WTC11 (cell line): ENCODE measurements at regions of chr16 and their contacts with region 1.

Region 1: GRCh38 chr16:84308120-84308519 is 13.4 kb downstream of the WFDC1 start:
- DNase-seq: peak; percentile 79
- ATAC-seq: peak; percentile 79
- H3K4me3 Mint-ChIP-seq: no peak overlapping the region
- H3K27ac Mint-ChIP-seq: no peak overlapping the region
- H3K4me1 Mint-ChIP-seq: peaks cover 14% of the 10 kb centered on the region
- H3K27me3 Mint-ChIP-seq: peaks cover 5% of the 10 kb centered on the region
- CTCF ChIP-seq: peak; percentile 32; the same call in 1 of the 2 replicates

Region 2: DNA sequence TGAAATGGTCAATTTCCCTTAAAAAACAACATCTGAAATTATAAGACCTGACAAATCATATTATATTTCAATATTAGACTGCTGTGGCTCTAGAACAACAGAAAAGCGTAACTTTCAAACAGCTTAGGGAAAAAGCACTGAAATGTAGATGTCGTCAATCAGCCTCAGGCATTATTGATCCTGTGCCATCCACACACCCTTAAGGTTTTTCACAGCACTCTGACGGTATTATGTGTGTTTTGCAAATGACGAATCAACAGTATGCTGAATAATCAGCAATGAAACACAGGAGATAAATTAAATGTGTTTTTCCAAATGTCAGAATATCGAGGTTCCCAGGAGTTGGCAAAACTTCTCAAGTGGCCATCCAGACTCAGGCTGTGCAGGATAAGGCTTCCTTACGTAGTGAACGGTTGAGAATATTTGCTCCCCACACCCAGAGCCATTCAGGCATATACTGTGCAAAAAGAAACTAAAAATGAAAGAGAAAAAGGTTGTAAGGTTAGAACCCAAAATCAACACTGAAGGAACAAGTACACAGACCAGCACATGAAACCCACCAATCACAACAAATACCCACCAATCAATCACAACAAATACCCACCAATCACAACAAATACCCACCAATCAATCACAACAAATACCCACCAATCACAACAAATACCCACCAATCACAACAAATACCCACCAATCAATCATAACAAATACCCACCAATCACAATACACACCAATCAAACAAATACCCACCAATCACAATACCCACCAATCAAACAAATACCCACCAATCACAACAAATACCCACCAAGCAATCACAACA is 183.7 kb before region 1 on chr16:
- CTCF ChIA-PET with region 1: no interaction called
- POLR2A ChIA-PET with region 1: no interaction called
- DNase-seq: no peak
- ATAC-seq: no peak
- H3K4me3 Mint-ChIP-seq: no peak overlapping the region
- H3K27ac Mint-ChIP-seq: no peak overlapping the region
- H3K4me1 Mint-ChIP-seq: no peaks in the 10 kb centered on the region
- H3K27me3 Mint-ChIP-seq: no peaks in the 10 kb centered on the region
- CTCF ChIP-seq: no peak

Region 3: GRCh38 chr16:84277237-84277823 is 30.8 kb before region 1 on chr16:
- CTCF ChIA-PET with region 1: interaction called, 86 read pairs
- POLR2A ChIA-PET with region 1: interaction called, 3 read pairs
- DNase-seq: peak; percentile 83
- ATAC-seq: peak; percentile 79
- H3K4me3 Mint-ChIP-seq: no peak overlapping the region
- H3K27ac Mint-ChIP-seq: no peak overlapping the region
- H3K4me1 Mint-ChIP-seq: peaks cover 10% of the 10 kb centered on the region
- H3K27me3 Mint-ChIP-seq: no peaks in the 10 kb centered on the region; the same call in 1 of the 2 replicates
- CTCF ChIP-seq: peak; percentile 93

Region 4: GRCh38 chr16:84284154-84284722 is 23.9 kb before region 1 on chr16:
- CTCF ChIA-PET with region 1: interaction called, 29 read pairs
- POLR2A ChIA-PET with region 1: interaction called, 3 read pairs
- DNase-seq: peak; percentile 55
- ATAC-seq: peak; percentile 89
- H3K4me3 Mint-ChIP-seq: peak overlapping the region; percentile 29
- H3K27ac Mint-ChIP-seq: 0 out of 2 replicates have a peak overlapping the region, but pooled peaks have one; percentile 47
- H3K4me1 Mint-ChIP-seq: peaks cover 22% of the 10 kb centered on the region
- H3K27me3 Mint-ChIP-seq: peaks cover 2% of the 10 kb centered on the region; the same call in 1 of the 2 replicates
- CTCF ChIP-seq: no peak

Region 5: DNA sequence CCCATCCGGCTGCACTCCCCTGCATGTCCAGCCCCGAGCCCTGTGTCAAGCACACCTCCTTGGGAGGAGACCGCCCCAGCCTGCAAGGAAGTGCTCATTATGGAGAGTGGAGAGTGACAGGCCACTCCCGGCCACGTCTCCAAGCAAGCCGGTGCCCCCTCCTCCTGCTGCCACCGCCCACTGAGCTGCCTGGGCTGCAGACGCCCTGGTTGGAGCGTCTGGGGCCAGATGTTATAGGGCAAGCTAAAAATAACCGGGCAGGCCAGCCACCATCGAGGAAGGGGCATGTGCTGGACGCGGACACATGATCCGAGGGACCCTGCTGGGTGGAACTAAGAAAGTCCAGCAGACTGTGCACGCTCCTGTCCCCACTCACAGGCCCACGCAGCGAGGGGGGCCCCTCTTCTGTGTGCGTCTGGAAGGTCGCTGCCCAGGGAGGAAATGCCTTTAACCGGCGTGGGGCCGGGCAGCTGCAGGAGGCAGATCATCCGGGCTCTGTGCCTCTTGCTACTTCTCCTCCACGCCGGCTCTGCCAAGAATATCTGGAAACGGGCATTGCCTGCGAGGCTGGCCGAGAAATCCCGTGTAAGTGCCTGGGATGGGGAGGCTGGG is 13.5 kb before region 1 on chr16 and contains the start of gene WFDC1:
- CTCF ChIA-PET with region 1: interaction called, 39 read pairs
- POLR2A ChIA-PET with region 1: no interaction called
- DNase-seq: peak; percentile 29
- ATAC-seq: peak; percentile 44
- H3K4me3 Mint-ChIP-seq: no peak within 1 kb of the TSS
- H3K27ac Mint-ChIP-seq: no peak within 1 kb of the TSS
- H3K4me1 Mint-ChIP-seq: peaks cover 53% of the 10 kb centered on the region
- H3K27me3 Mint-ChIP-seq: peaks cover 3% of the 10 kb centered on the region
- CTCF ChIP-seq: no peak
- total RNA-seq, gene WFDC1: 0.32 to 0.50 TPM (median 0.41 TPM) in 3 replicates

Region 6: DNA sequence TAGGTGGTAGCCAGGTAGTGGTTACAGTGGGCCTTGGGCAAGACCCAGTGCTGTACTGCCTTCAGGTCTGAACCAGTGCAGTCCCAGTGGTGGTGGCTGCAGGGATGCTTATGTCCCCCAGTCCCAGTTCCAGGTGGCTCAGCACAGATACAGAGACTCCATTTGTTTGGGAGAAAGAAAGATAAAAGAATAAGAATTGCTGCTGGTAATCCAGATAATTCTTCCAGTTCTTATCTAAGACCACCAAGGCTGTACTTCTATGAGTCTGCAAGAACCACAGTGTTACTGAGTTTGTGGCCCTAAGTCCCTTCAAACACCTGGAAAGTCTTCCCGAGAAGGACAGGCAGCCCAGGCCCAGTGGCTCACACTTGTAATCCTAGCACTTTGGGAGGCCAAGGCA is 26.4 kb after region 1 on chr16:
- CTCF ChIA-PET with region 1: no interaction called
- POLR2A ChIA-PET with region 1: no interaction called
- DNase-seq: no peak
- ATAC-seq: no peak
- H3K4me3 Mint-ChIP-seq: no peak overlapping the region
- H3K27ac Mint-ChIP-seq: no peak overlapping the region
- H3K4me1 Mint-ChIP-seq: peaks cover 7% of the 10 kb centered on the region
- H3K27me3 Mint-ChIP-seq: no peaks in the 10 kb centered on the region
- CTCF ChIP-seq: no peak

Region 7: DNA sequence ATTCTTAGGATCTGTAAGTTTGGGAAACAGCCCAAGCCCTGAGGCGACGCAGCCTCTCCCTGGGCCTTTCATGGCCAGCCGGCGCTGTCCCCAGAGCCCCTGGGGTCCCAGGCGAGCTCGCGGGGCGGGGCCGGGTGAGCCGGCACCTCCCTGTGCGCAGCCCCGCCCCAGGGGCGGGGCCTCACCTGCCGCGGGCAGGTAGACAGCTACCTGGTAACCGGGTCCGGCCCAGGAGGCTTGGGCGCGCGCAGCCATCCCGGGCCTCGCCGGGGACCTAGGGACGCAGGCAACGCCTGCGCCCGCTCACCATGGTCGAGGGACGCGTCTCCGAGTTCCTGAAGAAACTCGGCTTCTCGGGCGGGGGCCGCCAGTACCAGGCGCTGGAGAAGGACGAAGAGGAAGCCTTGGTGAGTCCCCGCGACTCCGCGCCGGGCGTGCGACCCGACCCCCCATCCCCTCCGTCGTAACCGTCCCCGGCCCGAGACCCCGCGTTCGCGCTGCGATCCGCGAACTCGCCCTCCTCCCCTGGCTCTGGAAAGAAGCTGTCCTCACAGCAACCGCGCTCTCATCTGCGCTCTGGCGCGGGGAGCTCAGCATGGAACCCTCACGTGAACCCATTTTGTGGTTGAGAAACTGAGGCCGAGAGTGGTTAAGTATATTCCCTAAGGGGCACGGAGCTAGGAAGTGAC is 60.3 kb after region 1 on chr16 and contains the start of gene ATP2C2:
- CTCF ChIA-PET with region 1: interaction called, 11 read pairs
- POLR2A ChIA-PET with region 1: no interaction called
- DNase-seq: peak; percentile 89
- ATAC-seq: peak; percentile 93
- H3K4me3 Mint-ChIP-seq: peak within 1 kb of the TSS; percentile 86
- H3K27ac Mint-ChIP-seq: no peak within 1 kb of the TSS
- H3K4me1 Mint-ChIP-seq: peaks cover 32% of the 10 kb centered on the region
- H3K27me3 Mint-ChIP-seq: peaks cover 32% of the 10 kb centered on the region
- CTCF ChIP-seq: no peak
- total RNA-seq, gene ATP2C2: 2.4 to 4.3 TPM (median 2.8 TPM) in 3 replicates

Region 8: DNA sequence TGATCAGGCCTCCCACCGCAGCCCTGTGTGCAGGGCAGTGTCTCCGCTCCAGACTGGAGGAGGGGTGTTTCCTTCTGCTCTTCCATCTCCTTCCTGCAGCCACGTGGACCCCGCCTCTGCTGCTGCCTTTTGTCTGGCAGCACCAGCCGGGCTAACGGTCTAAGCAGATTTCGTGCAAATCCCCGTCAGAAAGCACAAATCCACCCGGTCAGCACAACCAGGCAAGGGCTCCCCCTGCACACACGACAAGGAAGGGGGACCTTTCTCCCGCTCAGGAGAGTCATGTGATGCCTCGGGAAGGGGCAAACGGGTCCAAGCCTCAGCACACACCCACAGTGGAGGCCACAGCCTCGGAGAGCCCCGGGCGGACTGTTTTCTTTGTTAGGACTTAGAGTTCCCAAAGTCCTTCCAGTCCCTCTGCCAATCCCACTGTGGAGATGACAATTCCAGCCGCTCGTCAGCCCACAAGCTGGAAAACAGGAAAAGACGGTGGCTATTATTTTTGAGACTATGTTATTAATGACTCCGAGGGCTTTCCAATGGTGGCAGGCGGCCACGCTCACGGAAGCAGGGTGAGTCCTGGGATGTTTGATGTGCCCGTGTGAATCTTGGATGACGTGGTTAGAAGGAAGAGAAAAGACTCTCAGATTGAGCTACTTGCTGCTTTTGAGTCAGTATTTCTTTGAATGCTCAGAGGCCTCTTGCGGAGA is 218.8 kb after region 1 on chr16:
- CTCF ChIA-PET with region 1: no interaction called
- POLR2A ChIA-PET with region 1: no interaction called
- DNase-seq: no peak
- ATAC-seq: peak; percentile 53
- H3K4me3 Mint-ChIP-seq: no peak overlapping the region
- H3K27ac Mint-ChIP-seq: no peak overlapping the region
- H3K4me1 Mint-ChIP-seq: peaks cover 24% of the 10 kb centered on the region
- H3K27me3 Mint-ChIP-seq: peaks cover 9% of the 10 kb centered on the region
- CTCF ChIP-seq: no peak